Astrocyte of the cerebellum (primary cell): ENCODE measurements at regions of chr21 and their contacts with region 1.

Region 1: GRCh38 chr21:37467082-37467481 is 100.5 kb downstream of the DYRK1A start:
- DNase-seq: no peak
- H3K4me3 ChIP-seq: no peak overlapping the region
- CTCF ChIP-seq: no peak

Region 2: DNA sequence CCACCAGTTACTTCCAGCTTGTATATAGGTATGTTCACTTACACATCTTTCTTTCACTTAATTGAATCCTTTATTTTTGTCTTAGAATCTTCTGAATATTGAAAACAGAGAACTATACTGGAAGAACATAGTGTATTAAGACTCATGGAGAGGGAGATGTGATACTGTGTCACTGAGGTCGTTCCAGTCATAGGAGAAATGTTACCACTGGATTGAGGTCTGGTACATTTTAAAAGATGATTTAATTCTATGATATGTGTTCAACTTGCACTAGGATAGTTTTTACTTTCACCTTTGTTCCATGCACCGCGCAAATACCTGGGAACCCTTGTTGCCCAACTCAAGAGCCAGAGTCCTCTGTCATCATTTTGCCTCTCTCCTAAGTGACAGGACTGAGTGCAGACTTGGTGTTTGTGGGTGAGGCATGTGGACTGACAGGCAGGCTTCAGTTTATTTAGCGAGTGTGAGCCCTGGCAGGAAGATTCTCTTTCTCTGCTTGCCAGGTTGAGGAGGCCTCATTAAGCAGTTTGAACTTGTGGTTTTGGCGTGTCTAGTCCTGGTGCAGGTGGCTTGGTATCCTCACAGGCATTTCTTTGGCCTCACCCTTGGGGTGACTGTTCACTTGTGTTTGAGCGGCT is 36.8 kb before region 1 on chr21:
- in situ Hi-C with region 1: loop called (anchors 5 kb)
- DNase-seq: no peak
- H3K4me3 ChIP-seq: no peak overlapping the region
- CTCF ChIP-seq: no peak

Region 3: GRCh38 chr21:38114717-38115333 is 647.7 kb after region 1 on chr21:
- in situ Hi-C with region 1: no loop called
- DNase-seq: no peak
- H3K4me3 ChIP-seq: no peak overlapping the region
- CTCF ChIP-seq: no peak